ENCODE measurements at regions of chr11 and their contacts with region 1.

Region 1: DNA sequence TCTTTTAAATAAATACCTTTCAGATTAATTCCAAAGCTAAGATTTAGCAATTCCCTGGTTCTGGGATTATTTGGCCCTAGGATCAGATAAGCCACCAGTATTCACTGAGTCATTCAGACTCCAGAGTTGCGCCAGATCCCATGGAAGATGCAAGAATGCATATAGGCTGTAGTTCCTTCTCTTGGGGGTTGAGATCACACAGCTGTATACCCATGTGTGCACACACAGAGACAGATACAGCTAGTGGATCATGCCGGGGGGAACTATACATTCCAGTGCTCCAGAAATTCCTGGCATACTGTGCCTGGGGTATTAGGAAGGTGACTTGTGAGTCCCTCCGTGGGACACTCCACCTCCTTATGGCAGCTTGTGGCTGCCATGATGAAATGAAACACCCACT is 75.4 kb downstream of the ZBTB16 start:
- DNase-seq: no peak
- H3K4me3 Mint-ChIP-seq: no peak overlapping the region
- H3K27ac Mint-ChIP-seq: no peak overlapping the region
- H3K4me1 Mint-ChIP-seq: peaks cover 44% of the 10 kb centered on the region
- H3K27me3 Mint-ChIP-seq: no peaks in the 10 kb centered on the region

Region 2: GRCh38 chr11:114080219-114080618 is 54.7 kb before region 1 on chr11:
- CTCF ChIA-PET with region 1: no interaction called
- intact Hi-C with region 1: loop called (anchors 2 kb)
- DNase-seq: no peak
- H3K4me3 Mint-ChIP-seq: no peak overlapping the region
- H3K27ac Mint-ChIP-seq: no peak overlapping the region
- H3K4me1 Mint-ChIP-seq: peaks cover 57% of the 10 kb centered on the region
- H3K27me3 Mint-ChIP-seq: peaks cover 6% of the 10 kb centered on the region

Measured in activated naive CD4-positive, alpha-beta T cell treated with anti-CD3 and anti-CD28 coated beads for 36 hours (primary cell).